Mammary epithelial cell (primary cell): ENCODE measurements at regions of chr4 and their contacts with region 1.

Region 1: DNA sequence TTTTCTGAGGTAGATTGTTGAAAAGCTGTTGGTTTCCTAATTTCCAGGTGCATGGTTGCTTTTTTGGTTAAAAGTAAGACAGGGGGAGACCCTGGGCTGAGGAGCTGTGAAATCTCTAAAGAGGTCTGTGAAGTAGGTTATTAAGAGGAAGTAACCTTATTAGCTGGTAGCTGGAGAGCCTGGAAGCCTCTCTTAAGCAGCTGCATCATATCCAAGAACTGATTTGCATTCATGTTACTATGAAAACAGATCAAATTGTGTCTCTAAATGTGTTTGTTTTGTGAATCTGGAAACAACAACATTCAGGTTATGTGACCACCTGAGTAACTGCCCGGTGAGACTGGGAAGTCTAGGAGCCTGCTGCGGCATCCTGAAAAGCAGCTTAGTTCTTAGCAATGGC is 54.1 kb downstream of the ARHGAP10 start:
- DNase-seq: no peak
- H3K4me3 ChIP-seq: no peak overlapping the region
- H3K27ac ChIP-seq: no peak overlapping the region
- H3K4me1 ChIP-seq: peaks cover 11% of the 10 kb centered on the region
- H3K27me3 ChIP-seq: no peaks in the 10 kb centered on the region
- CTCF ChIP-seq: no peak

Region 2: GRCh38 chr4:147707865-147708672 is 78.0 kb before region 1 on chr4:
- CTCF ChIA-PET with region 1: no interaction called
- dilution Hi-C with region 1: loop called (anchors 5 kb)
- in situ Hi-C with region 1: no loop called
- intact Hi-C with region 1: no loop called
- DNase-seq: peak; percentile 30
- H3K4me3 ChIP-seq: no peak overlapping the region
- H3K27ac ChIP-seq: no peak overlapping the region
- H3K4me1 ChIP-seq: no peaks in the 10 kb centered on the region
- H3K27me3 ChIP-seq: no peaks in the 10 kb centered on the region
- CTCF ChIP-seq: peak; percentile 86 to 92

Region 3: GRCh38 chr4:148300877-148301276 is 514.8 kb after region 1 on chr4:
- CTCF ChIA-PET with region 1: no interaction called
- dilution Hi-C with region 1: no loop called
- in situ Hi-C with region 1: no loop called
- intact Hi-C with region 1: no loop called
- DNase-seq: no peak
- H3K4me3 ChIP-seq: no peak overlapping the region
- H3K27ac ChIP-seq: no peak overlapping the region
- H3K4me1 ChIP-seq: no peaks in the 10 kb centered on the region
- H3K27me3 ChIP-seq: no peaks in the 10 kb centered on the region
- CTCF ChIP-seq: no peak